ENCODE measurements at regions of chr22 and their contacts with region 1.

Region 1: GRCh38 chr22:32796865-32797573 is 4.5 kb upstream of the TIMP3 start:
- DNase-seq: peak; percentile 44
- ATAC-seq: peak; percentile 76
- H3K4me3 ChIP-seq: no peak overlapping the region
- H3K27ac ChIP-seq: no peak overlapping the region
- H3K4me1 ChIP-seq: peaks cover 62% of the 10 kb centered on the region
- H3K27me3 ChIP-seq: no peaks in the 10 kb centered on the region
- CTCF ChIP-seq: peak; percentile 98
- EP300 ChIP-seq: no peak
- POLR2A ChIP-seq: no peak
- RAD21 ChIP-seq: peak; percentile 97

Region 2: DNA sequence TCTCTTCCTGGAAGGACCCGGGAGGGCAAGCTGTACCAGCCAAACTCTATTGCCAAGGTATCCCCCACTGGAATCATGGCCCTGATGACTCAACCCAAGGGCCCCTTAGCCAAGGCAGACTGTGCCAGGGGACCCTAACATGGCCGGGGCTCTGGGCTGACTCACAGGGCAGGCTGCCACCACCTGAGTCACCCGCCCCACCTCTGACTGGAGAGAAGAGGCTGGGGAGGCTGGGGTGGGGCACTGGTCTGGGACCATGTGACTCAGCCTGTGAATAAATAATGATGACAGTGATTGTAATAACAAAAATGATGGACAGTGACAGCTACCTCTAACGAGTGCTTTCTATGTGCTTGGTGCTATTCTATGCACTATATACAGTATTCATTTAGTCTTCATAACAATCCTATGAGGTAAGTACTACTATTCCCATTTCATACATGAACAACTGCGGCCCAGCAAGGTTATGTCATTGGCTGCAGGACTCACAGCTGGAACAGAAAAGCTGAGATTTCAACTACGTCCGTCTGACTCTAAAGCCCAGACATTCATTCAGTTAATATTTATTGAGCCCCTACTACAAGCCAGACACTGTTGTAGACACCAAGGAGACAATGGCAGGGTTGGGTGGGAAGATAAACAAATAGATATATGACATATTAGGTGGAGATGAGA is 238.2 kb before region 1 on chr22:
- CTCF ChIA-PET with region 1: no interaction called
- POLR2A ChIA-PET with region 1: no interaction called
- in situ Hi-C with region 1: no loop called
- intact Hi-C with region 1: no loop called
- DNase-seq: no peak
- ATAC-seq: no peak; the same call in 1 of the 3 replicates
- H3K4me3 ChIP-seq: no peak overlapping the region
- H3K27ac ChIP-seq: no peak overlapping the region
- H3K4me1 ChIP-seq: peaks cover 15% of the 10 kb centered on the region; the same call in 1 of the 2 replicates
- H3K27me3 ChIP-seq: no peaks in the 10 kb centered on the region
- CTCF ChIP-seq: no peak
- EP300 ChIP-seq: no peak
- POLR2A ChIP-seq: no peak
- RAD21 ChIP-seq: no peak

Region 3: GRCh38 chr22:32622004-32622743 is 174.8 kb before region 1 on chr22:
- CTCF ChIA-PET with region 1: no interaction called
- POLR2A ChIA-PET with region 1: interaction called, 12 read pairs
- in situ Hi-C with region 1: no loop called
- intact Hi-C with region 1: no loop called
- DNase-seq: peak; percentile 89
- ATAC-seq: peak; percentile 80
- H3K4me3 ChIP-seq: peak overlapping the region; percentile 43 to 60 (median 50)
- H3K27ac ChIP-seq: peak overlapping the region; percentile 92
- H3K4me1 ChIP-seq: peaks cover 99% of the 10 kb centered on the region
- H3K27me3 ChIP-seq: no peaks in the 10 kb centered on the region
- CTCF ChIP-seq: no peak
- EP300 ChIP-seq: peak in 1 of 2 experiments; percentile 71; a peak in 2 of 4 replicates
- POLR2A ChIP-seq: peak in 1 of 2 experiments; percentile 49; a peak in 1 of 4 replicates
- RAD21 ChIP-seq: no peak

Region 4: GRCh38 chr22:32684822-32685187 is 112.2 kb before region 1 on chr22:
- CTCF ChIA-PET with region 1: no interaction called
- POLR2A ChIA-PET with region 1: no interaction called
- in situ Hi-C with region 1: no loop called
- intact Hi-C with region 1: loop called (anchors 5 kb)
- DNase-seq: no peak
- ATAC-seq: no peak
- H3K4me3 ChIP-seq: no peak overlapping the region
- H3K27ac ChIP-seq: no peak overlapping the region
- H3K4me1 ChIP-seq: peaks cover 40% of the 10 kb centered on the region
- H3K27me3 ChIP-seq: no peaks in the 10 kb centered on the region
- CTCF ChIP-seq: no peak
- EP300 ChIP-seq: no peak
- POLR2A ChIP-seq: no peak
- RAD21 ChIP-seq: no peak

Region 5: DNA sequence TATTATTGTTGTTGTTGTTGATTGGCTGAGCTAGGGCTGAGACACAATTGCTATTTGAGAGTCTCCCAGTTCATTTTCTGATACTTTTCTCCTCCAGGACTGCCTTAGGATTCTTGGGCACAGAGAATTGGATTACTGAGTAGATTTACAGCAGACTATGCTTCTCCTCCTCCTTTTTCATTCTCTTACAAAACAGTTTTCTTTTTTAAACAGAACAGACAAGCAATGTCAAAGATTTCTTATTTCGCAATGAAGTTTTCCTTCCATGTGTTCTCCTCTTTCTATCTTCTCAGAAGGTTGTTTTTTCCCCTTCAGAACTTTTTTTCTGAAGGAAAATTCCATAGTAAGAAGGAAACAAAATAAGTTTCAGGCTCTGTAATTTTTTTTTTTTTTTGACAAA is 15.3 kb before region 1 on chr22:
- CTCF ChIA-PET with region 1: interaction called, 14 read pairs
- POLR2A ChIA-PET with region 1: interaction called, 84 read pairs
- in situ Hi-C with region 1: no loop called
- intact Hi-C with region 1: no loop called
- DNase-seq: no peak
- ATAC-seq: no peak
- H3K4me3 ChIP-seq: no peak overlapping the region
- H3K27ac ChIP-seq: peak overlapping the region; percentile 55
- H3K4me1 ChIP-seq: peaks cover 98% of the 10 kb centered on the region
- H3K27me3 ChIP-seq: no peaks in the 10 kb centered on the region
- CTCF ChIP-seq: no peak
- EP300 ChIP-seq: no peak
- POLR2A ChIP-seq: no peak
- RAD21 ChIP-seq: no peak

Region 6: DNA sequence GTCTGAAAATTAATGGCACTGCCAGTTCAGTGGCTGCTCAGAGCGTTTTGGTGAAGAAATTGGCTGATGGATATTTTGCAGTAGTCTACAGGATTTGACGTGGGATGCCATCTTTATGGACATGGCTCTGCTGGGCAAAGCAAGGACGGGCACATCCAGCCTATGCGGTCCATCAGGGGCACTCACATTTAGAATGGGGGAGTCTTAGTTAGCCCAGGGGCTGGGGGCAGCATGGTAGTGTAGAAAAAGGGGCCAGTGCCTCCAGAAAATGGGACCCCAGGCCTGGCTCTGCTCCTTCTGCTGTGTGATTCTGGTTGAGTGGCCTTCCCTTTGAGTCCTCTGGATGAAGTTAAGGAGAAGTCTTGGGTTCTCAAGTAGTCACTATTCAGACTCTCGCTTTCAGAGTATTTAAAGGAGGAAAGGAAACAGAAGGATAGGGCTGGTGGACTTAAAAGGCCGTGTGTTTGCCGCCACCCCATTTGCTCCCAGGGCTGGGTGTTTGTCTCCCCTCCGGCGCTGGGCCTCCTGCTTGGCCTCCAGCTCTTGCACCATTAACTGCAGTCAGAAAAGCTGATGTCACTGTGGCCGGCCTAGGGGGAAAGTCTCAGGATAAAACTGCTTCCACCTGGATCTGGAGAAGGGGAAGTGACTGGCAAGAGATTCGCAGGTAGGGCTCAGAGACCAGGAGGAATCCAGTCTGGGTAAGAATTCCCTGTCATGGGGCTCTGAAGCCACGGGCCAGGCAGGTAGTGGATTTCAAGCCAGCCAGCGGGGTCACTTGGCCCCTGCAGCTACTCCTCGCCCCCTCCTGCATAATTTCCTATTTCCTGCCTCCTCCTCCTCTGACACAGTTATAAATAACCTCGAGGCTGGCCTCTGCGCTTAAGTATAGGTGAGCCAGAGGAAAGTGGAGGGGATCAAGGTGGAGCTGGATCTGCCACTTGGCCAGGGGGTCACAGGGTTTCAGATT is 21.4 kb after region 1 on chr22:
- CTCF ChIA-PET with region 1: no interaction called
- POLR2A ChIA-PET with region 1: no interaction called
- in situ Hi-C with region 1: no loop called
- intact Hi-C with region 1: no loop called
- DNase-seq: no peak
- ATAC-seq: no peak
- H3K4me3 ChIP-seq: no peak overlapping the region
- H3K27ac ChIP-seq: no peak overlapping the region
- H3K4me1 ChIP-seq: 0 out of 2 replicates have a peak, but pooled peaks cover 10% of the 10 kb centered on the region
- H3K27me3 ChIP-seq: no peaks in the 10 kb centered on the region
- CTCF ChIP-seq: no peak
- EP300 ChIP-seq: no peak
- POLR2A ChIP-seq: no peak
- RAD21 ChIP-seq: no peak

Region 7: DNA sequence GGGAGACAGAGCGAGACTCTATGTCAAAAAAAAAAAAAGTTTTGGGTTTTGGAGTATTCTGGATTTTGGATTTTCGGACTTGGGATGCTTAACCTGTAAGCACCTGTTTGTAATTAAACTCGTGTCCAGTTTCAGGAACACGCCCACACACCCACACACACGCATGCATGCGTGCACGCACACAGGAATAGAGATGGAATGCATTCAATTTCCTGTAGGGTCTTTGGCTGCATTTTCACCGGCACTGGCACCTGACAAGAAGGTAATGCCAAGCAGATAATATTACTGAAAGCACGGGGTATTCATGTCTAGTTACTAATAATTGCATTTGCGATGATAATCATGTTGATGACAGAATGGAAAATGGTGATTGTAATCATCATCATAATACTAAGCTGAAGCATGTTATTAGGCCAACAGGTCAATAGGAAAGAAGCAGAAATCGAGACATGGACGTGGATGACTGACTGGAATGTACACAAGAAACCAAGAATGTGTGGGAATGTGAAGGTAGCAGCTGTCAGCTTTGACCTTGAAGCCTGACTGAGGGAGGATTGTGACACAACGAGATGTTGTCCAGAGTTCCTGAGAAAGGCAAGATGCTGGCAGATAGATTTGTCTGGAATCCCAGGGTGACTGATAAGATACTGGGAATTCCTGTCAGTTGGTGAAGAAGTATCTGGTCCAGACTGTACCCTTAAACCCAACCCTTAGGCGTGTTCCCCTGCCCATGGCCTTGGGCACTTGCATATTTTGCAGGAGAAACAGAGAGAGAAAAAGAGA is 152.6 kb after region 1 on chr22:
- CTCF ChIA-PET with region 1: no interaction called
- POLR2A ChIA-PET with region 1: no interaction called
- in situ Hi-C with region 1: no loop called
- intact Hi-C with region 1: no loop called
- DNase-seq: peak; percentile 54
- ATAC-seq: no peak; the same call in 1 of the 3 replicates
- H3K4me3 ChIP-seq: no peak overlapping the region
- H3K27ac ChIP-seq: no peak overlapping the region
- H3K4me1 ChIP-seq: peaks cover 17% of the 10 kb centered on the region
- H3K27me3 ChIP-seq: no peaks in the 10 kb centered on the region
- CTCF ChIP-seq: no peak
- EP300 ChIP-seq: no peak
- POLR2A ChIP-seq: no peak
- RAD21 ChIP-seq: no peak

Region 8: DNA sequence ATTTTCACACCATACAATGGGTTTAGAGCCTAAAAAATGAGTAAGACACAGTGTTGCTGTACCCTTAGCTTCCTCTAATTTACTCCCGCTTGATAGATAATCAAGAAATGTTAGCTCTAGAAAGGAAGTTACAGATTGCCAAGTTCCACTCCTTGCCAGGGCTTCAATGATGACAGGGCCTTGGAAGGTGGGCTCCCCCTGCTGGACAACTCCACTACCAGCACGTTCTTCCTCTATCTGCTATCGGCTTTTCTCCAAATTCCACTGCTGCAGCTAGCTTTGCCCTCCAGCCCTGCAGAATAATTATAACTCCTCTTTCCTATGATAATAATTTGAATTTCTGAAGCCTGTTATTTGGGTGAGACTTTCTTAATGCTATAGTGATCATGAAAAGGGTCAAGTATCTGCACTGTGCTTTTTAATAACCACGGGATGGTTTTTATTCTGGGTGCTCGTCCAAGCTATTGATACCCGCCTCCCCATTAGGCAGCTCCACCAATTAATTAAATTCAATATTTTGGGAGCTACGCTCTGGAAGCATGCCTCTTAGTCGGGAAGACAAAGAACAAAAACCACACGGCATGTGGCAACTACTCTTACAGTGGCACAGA is 252.2 kb after region 1 on chr22:
- CTCF ChIA-PET with region 1: no interaction called
- POLR2A ChIA-PET with region 1: no interaction called
- in situ Hi-C with region 1: no loop called
- intact Hi-C with region 1: loop called (anchors 5 kb)
- DNase-seq: peak; percentile 62
- ATAC-seq: peak; percentile 72
- H3K4me3 ChIP-seq: no peak overlapping the region
- H3K27ac ChIP-seq: no peak overlapping the region
- H3K4me1 ChIP-seq: peaks cover 41% of the 10 kb centered on the region
- H3K27me3 ChIP-seq: no peaks in the 10 kb centered on the region
- CTCF ChIP-seq: peak; percentile 82
- EP300 ChIP-seq: no peak
- POLR2A ChIP-seq: no peak
- RAD21 ChIP-seq: no peak

Measured in HepG2 (cell line).